ENCODE measurements at regions of chr20 and their contacts with region 1.

Region 1: DNA sequence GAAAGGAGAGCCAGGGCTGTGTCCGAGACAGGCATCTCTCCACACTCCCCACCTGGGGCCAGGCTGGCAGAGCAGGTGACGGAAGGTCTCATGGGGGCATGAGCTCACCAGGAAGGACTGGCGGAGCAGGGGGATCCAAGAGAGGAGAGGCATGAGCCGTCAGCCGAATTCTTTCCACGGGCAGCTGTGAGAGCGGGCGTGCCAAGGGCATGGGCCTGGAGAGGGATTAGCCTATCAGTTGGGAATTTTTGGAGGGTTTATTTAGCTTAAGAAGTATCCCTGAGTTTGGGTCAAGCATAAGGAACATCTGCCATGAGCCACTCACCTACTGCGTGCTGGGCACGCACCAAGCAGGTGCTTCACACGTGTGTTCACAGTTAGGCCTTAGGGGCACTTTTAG is 60.2 kb upstream of the ZNFX1 start:
- DNase-seq: no peak
- H3K4me3 ChIP-seq: no peak overlapping the region
- H3K27ac ChIP-seq: no peak overlapping the region
- H3K4me1 ChIP-seq: no peaks in the 10 kb centered on the region
- H3K27me3 ChIP-seq: no peaks in the 10 kb centered on the region
- CTCF ChIP-seq: no peak
- POLR2A ChIP-seq: no peak

Region 2: GRCh38 chr20:49096203-49096730 is 241.8 kb before region 1 on chr20:
- intact Hi-C with region 1: no loop called
- DNase-seq: no peak
- H3K4me3 ChIP-seq: no peak overlapping the region
- H3K27ac ChIP-seq: no peak overlapping the region
- H3K4me1 ChIP-seq: no peaks in the 10 kb centered on the region
- H3K27me3 ChIP-seq: no peaks in the 10 kb centered on the region
- CTCF ChIP-seq: no peak
- POLR2A ChIP-seq: no peak

Region 3: GRCh38 chr20:49397525-49397924 is 59.5 kb after region 1 on chr20:
- intact Hi-C with region 1: no loop called
- DNase-seq: no peak
- H3K4me3 ChIP-seq: no peak overlapping the region
- H3K27ac ChIP-seq: no peak overlapping the region
- H3K4me1 ChIP-seq: peaks cover 33% of the 10 kb centered on the region
- H3K27me3 ChIP-seq: no peaks in the 10 kb centered on the region
- CTCF ChIP-seq: no peak
- POLR2A ChIP-seq: no peak

Region 4: DNA sequence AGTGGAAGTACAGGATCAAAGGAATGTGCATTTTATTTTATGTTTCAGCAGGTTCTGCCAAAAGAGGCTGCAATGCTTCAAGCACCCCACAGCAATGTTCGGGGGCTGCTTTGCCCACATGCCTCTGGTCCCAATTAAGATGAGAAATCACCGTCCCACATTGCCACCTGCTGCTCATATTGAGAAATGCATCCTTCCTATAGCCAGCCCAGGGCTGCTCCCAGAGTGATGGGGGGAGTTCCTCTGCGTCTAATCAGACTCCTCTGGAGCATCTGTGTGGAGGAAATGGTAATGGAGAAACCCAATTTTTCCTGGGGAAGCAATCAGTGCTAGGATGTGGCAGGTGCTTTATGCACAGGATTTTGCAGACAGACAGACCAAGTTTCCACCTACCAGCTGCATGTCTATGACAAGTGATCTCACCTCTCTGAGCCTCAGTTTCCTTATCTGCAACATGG is 196.2 kb after region 1 on chr20:
- intact Hi-C with region 1: loop called (anchors 10 kb)
- DNase-seq: no peak
- H3K4me3 ChIP-seq: no peak overlapping the region
- H3K27ac ChIP-seq: no peak overlapping the region
- H3K4me1 ChIP-seq: no peaks in the 10 kb centered on the region
- H3K27me3 ChIP-seq: no peaks in the 10 kb centered on the region
- CTCF ChIP-seq: peak; percentile 37 to 84 (median 83)
- POLR2A ChIP-seq: no peak

Measured in vagina (tissue), 2 donors.